ENCODE measurements at regions of chr5 and their contacts with region 1.

Region 1: DNA sequence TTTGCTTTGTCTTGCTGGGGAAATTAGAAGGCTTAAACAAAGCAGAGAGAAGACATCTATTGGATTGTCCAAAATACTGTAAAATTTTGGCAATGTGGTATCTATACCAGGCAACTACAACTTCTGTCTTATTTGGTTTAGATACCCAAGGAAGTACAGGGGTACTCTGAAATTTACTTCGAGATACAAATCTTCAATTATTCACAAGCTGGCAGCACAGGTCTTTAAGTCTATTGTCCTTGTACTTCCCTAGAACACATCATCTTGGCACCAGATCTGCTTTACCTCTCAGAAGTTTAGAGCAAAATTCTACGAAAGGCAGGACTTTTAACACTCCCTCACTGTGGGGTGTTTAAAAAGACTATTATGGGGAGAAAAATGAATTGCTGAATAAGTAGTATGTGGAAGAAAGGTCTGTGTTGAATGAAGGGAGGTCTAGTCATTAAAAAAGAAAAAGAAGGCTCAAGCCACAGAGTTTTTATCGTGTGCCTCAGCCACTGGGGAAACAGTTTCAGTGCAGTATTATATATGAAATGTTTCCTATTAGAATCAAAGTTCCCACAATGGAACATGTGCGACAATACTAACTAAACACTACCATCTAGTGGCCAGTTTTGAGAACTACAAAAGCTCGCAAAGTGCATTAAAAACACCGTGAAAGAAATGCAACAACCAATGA is 93.7 kb downstream of the PDE4D start:
- DNase-seq: peak in 1 of 4 donors; percentile 28
- ATAC-seq: peak; percentile 84
- H3K4me3 ChIP-seq: no peak overlapping the region
- H3K27ac ChIP-seq: peak overlapping the region in 2 of 4 donors; percentile 19 to 37
- H3K4me1 ChIP-seq: peaks cover 10% of the 10 kb centered on the region
- H3K27me3 ChIP-seq: no peaks in the 10 kb centered on the region
- CTCF ChIP-seq: peak; percentile 58 to 90 (median 78)
- POLR2A ChIP-seq: no peak

Region 2: GRCh38 chr5:59380350-59380951 is 419.4 kb before region 1 on chr5:
- intact Hi-C with region 1: loop called (anchors 10 kb)
- DNase-seq: no peak
- ATAC-seq: peak; percentile 66
- H3K4me3 ChIP-seq: no peak overlapping the region
- H3K27ac ChIP-seq: no peak overlapping the region
- H3K4me1 ChIP-seq: no peaks in the 10 kb centered on the region
- H3K27me3 ChIP-seq: no peaks in the 10 kb centered on the region
- CTCF ChIP-seq: peak in 6 of 7 experiments; percentile 43 to 67 (median 62)
- POLR2A ChIP-seq: no peak

Region 3: GRCh38 chr5:59506285-59506877 is 293.4 kb before region 1 on chr5:
- intact Hi-C with region 1: loop called (anchors 10 kb)
- DNase-seq: no peak
- ATAC-seq: no peak
- H3K4me3 ChIP-seq: no peak overlapping the region
- H3K27ac ChIP-seq: no peak overlapping the region
- H3K4me1 ChIP-seq: no peaks in the 10 kb centered on the region
- H3K27me3 ChIP-seq: no peaks in the 10 kb centered on the region
- CTCF ChIP-seq: peak; percentile 17 to 79 (median 71)
- POLR2A ChIP-seq: no peak

Measured in body of pancreas (tissue), 4 donors.